Activated naive CD4-positive, alpha-beta T cell treated with anti-CD3 and anti-CD28 coated beads for 36 hours (primary cell): ENCODE measurements at regions of chr16 and their contacts with region 1.

Region 1: GRCh38 chr16:25966172-25967097 is 274.7 kb downstream of the HS3ST4 start:
- DNase-seq: peak; percentile 61
- H3K4me3 Mint-ChIP-seq: no peak overlapping the region
- H3K27ac Mint-ChIP-seq: no peak overlapping the region
- H3K4me1 Mint-ChIP-seq: peaks cover 10% of the 10 kb centered on the region
- H3K27me3 Mint-ChIP-seq: peaks cover 2% of the 10 kb centered on the region

Region 2: DNA sequence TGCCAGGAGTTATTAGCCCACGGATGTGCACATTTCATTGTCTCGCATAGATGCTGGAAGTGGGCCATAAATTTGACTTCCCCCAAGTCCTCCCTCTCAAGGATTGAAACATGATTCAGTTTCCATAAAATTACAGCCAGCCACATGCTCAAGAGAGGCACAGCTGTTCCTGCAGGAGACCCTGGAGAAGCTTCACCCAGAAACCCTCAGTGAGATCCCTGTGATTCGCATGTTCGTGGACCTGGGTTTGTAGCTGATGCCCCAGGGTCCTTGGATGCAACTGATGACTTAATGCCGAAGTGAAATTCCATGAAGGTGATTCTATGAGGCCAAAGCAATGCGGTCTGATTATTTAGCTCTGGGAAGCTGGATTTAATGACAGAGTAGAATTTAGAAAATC is 774.3 kb before region 1 on chr16:
- CTCF ChIA-PET with region 1: no interaction called
- intact Hi-C with region 1: no loop called
- DNase-seq: no peak
- H3K4me3 Mint-ChIP-seq: no peak overlapping the region
- H3K27ac Mint-ChIP-seq: no peak overlapping the region
- H3K4me1 Mint-ChIP-seq: no peaks in the 10 kb centered on the region
- H3K27me3 Mint-ChIP-seq: no peaks in the 10 kb centered on the region

Region 3: GRCh38 chr16:25812215-25812614 is 154.2 kb before region 1 on chr16:
- CTCF ChIA-PET with region 1: no interaction called
- intact Hi-C with region 1: no loop called
- DNase-seq: no peak
- H3K4me3 Mint-ChIP-seq: no peak overlapping the region
- H3K27ac Mint-ChIP-seq: no peak overlapping the region
- H3K4me1 Mint-ChIP-seq: no peaks in the 10 kb centered on the region
- H3K27me3 Mint-ChIP-seq: peaks cover 19% of the 10 kb centered on the region

Region 4: DNA sequence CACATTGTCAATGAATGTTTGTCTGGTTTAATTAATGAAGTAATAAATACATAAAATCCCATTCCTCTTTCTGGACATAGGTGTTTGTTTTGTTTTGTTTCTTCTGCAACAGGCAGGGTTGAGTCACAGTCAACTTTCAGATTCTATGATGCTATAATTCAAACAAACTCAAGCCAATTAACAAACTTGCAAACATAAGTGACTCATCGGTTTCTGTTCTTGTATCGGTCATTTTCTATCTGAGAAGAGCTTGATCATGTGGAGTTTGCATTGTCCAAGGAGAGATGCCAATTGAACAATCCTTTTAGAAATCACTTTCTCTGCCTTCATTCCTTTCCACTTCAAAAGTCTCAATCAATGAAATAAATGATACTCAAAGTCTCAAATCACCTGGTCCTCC is 806.1 kb after region 1 on chr16:
- CTCF ChIA-PET with region 1: no interaction called
- intact Hi-C with region 1: loop called (anchors 5 kb)
- DNase-seq: no peak
- H3K4me3 Mint-ChIP-seq: no peak overlapping the region
- H3K27ac Mint-ChIP-seq: no peak overlapping the region
- H3K4me1 Mint-ChIP-seq: peaks cover 11% of the 10 kb centered on the region
- H3K27me3 Mint-ChIP-seq: peaks cover 40% of the 10 kb centered on the region